ENCODE measurements at regions of chr10 and their contacts with region 1.

Region 1: DNA sequence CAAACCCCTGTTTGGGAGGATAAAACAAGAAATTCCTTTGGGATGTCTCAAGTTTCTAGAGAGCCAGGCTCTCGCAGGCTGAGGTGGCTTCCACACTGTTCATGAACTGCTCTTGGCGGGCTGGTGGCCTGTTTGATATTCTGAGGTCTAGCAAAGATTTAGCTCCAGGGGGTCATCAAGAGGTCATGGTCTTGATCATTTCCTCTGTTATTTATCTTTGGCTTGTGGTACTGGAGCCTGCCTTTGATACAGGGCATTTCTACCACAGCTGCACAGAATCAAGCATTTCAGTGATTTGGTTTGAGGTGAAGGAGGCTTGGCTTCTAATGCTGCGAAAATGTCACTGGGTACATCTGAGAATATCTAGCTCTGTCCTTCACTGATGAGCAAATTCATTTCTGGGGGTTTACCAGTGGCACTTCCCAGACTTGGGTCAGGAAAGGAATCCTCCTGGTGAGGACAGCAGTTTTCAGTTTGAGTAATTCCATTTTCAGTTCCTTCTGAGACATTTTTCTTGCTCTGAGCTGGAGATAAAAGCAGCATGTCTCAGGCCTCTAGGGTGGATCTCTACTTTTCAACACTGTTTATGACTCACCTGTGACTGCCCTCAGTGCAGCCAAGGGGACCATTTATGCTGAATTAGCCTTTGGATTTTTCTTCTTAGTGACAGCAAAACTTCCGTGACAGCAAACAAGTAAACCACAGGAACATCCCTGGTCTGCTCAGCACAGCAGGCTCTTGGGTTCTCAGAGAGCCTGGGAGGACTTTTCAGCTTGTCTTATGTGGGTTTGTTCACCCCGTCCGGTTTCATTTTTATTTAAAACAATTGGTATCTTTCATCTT is 312.0 kb downstream of the RNLS start:
- DNase-seq: peak; percentile 63
- H3K4me3 Mint-ChIP-seq: peak overlapping the region; percentile 36
- H3K27ac Mint-ChIP-seq: peak overlapping the region; percentile 86
- H3K4me1 Mint-ChIP-seq: peaks cover 59% of the 10 kb centered on the region
- H3K27me3 Mint-ChIP-seq: peaks cover 3% of the 10 kb centered on the region

Region 2: GRCh38 chr10:87761892-87762291 is 509.2 kb before region 1 on chr10:
- intact Hi-C with region 1: loop called (anchors 5 kb)
- DNase-seq: peak; percentile 11
- H3K4me3 Mint-ChIP-seq: peak overlapping the region; percentile 28
- H3K27ac Mint-ChIP-seq: peak overlapping the region; percentile 56
- H3K4me1 Mint-ChIP-seq: peaks cover 16% of the 10 kb centered on the region
- H3K27me3 Mint-ChIP-seq: no peaks in the 10 kb centered on the region

Region 3: DNA sequence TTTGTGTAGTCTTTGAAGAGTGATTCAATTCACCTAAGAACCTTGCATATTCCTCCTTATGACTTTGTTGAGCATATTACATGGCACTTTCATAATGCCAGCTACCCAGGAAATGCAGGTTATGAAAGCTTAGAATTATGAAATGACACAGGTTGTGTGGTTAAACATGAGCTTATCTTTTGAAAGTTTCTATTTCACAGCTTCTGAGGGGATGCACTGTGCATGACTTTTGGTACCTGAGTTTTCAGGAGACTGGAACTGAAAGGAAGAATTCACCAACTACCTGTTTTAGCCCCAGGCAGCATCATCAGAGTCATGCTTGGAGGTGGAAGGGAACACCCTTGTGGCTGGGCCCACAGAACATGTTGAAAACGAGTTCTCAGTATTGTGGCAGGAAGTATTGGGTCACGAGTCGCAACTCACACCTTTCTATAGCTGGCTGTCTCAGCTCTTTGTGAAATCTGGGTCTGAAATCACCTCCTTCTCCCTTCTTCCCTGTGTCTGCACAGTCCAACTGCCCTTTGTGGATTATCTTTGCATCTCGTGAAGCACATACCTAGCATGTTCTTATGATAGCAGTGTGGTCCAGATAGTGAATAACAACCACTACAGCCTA is 179.5 kb before region 1 on chr10:
- intact Hi-C with region 1: loop called (anchors 1 kb)
- DNase-seq: peak; percentile 76
- H3K4me3 Mint-ChIP-seq: peak overlapping the region; percentile 13
- H3K27ac Mint-ChIP-seq: peak overlapping the region; percentile 68
- H3K4me1 Mint-ChIP-seq: peaks cover 35% of the 10 kb centered on the region
- H3K27me3 Mint-ChIP-seq: peaks cover 29% of the 10 kb centered on the region

Region 4: GRCh38 chr10:88194041-88194887 is 76.8 kb before region 1 on chr10:
- intact Hi-C with region 1: loop called (anchors 1 kb)
- DNase-seq: peak; percentile 47
- H3K4me3 Mint-ChIP-seq: peak overlapping the region; percentile 43
- H3K27ac Mint-ChIP-seq: peak overlapping the region; percentile 90
- H3K4me1 Mint-ChIP-seq: peaks cover 35% of the 10 kb centered on the region
- H3K27me3 Mint-ChIP-seq: peaks cover 3% of the 10 kb centered on the region

Region 5: DNA sequence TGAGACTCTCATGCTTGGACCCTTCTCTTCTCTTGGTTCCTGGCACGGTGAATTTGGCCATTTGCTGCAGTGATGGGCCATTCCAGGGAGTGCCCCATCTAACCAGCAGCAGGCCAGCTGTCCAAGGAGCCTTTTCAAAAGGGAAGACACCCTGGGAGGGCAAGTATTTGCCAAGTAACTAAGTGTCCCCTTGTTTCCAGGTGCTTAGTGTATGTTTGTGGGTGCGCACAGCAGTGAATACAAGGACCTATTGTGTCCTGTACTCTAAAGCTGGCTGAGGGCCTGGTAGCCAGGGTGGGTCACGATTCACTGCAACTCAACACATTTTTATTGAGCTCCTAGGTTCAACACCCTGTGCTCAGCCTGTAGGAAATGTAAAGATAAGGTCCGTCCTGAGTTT is 36.8 kb before region 1 on chr10:
- intact Hi-C with region 1: no loop called
- DNase-seq: no peak
- H3K4me3 Mint-ChIP-seq: no peak overlapping the region
- H3K27ac Mint-ChIP-seq: no peak overlapping the region
- H3K4me1 Mint-ChIP-seq: peaks cover 19% of the 10 kb centered on the region
- H3K27me3 Mint-ChIP-seq: peaks cover 3% of the 10 kb centered on the region

Region 6: GRCh38 chr10:88297103-88297502 is 26.0 kb after region 1 on chr10:
- intact Hi-C with region 1: no loop called
- DNase-seq: no peak
- H3K4me3 Mint-ChIP-seq: no peak overlapping the region
- H3K27ac Mint-ChIP-seq: no peak overlapping the region
- H3K4me1 Mint-ChIP-seq: peaks cover 18% of the 10 kb centered on the region
- H3K27me3 Mint-ChIP-seq: no peaks in the 10 kb centered on the region

Region 7: GRCh38 chr10:88318803-88319202 is 47.7 kb after region 1 on chr10:
- intact Hi-C with region 1: loop called (anchors 2 kb)
- DNase-seq: no peak
- H3K4me3 Mint-ChIP-seq: no peak overlapping the region
- H3K27ac Mint-ChIP-seq: no peak overlapping the region
- H3K4me1 Mint-ChIP-seq: peaks cover 3% of the 10 kb centered on the region
- H3K27me3 Mint-ChIP-seq: peaks cover 4% of the 10 kb centered on the region

Region 8: DNA sequence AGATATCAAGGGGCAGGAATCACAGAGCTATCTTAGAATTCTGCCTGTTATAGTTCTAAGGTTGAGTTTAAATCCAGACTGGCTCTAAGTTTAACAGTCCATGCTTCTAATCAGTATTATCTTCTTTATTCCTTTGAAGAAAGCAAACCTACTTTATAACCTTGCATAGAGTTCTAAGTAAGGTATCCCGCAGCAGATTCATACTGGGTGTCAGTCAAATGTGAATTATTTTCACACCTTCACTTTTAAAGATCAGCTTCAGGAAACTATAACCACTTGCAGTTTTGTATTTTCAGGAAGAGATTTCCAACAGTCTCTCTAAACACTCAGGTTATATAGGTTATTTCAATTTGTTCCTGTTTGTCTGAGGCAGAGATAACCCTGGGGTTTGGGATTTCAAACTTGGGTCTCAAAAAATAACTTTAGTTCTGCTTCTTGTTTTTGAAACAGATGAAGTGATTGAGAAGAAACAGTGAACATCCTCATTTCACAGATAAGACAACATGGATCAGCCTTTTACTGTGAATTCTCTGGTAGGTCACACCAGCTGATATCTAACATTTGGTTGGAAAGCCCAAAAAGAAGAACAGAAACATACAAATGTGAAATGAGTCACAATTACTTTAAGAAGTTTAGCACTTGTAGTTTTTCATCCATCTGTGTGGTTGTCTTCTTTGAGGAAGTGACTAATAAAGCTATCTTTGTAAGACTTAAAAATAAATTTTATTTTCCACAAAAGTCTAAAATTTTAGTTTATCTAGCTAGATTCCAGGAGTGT is 630.3 kb after region 1 on chr10:
- intact Hi-C with region 1: loop called (anchors 10 kb)
- DNase-seq: no peak
- H3K4me3 Mint-ChIP-seq: peak overlapping the region; percentile 73
- H3K27ac Mint-ChIP-seq: peak overlapping the region; percentile 89
- H3K4me1 Mint-ChIP-seq: peaks cover 68% of the 10 kb centered on the region
- H3K27me3 Mint-ChIP-seq: no peaks in the 10 kb centered on the region

Measured in activated T-helper 1 cell treated with anti-CD3 and anti-CD28 coated beads, Interleukin-12 subunit alpha, Interleukin-12 subunit beta, Interleukin-2, Interleukin-4 antibody, amounts not matched to agents 30 ng/mL and 10 ng/mL and 1 ng/mL, durations not matched to agents 14 hours and 24 hours and 36 hours (primary cell).